ENCODE measurements at regions of chr5 and their contacts with region 1.

Region 1: GRCh38 chr5:173823711-173824528 is 64.2 kb upstream of the CPEB4 start:
- DNase-seq: peak; percentile 82 to 98
- H3K4me3 ChIP-seq: peak overlapping the region; percentile 25; the same call in 1 of the 2 replicates
- H3K27ac ChIP-seq: peak overlapping the region; percentile 77
- H3K4me1 ChIP-seq: peaks cover 58% of the 10 kb centered on the region
- H3K27me3 ChIP-seq: no peaks in the 10 kb centered on the region
- CTCF ChIP-seq: no peak

Region 2: GRCh38 chr5:173331956-173332479 is 491.9 kb before region 1 on chr5:
- CTCF ChIA-PET with region 1: no interaction called
- POLR2A ChIA-PET with region 1: no interaction called
- intact Hi-C with region 1: loop called (anchors 10 kb)
- DNase-seq: peak; percentile 55 to 57
- H3K4me3 ChIP-seq: no peak overlapping the region
- H3K27ac ChIP-seq: peak overlapping the region; percentile 100; the same call in 1 of the 2 replicates
- H3K4me1 ChIP-seq: peaks cover 64% of the 10 kb centered on the region
- H3K27me3 ChIP-seq: no peaks in the 10 kb centered on the region
- CTCF ChIP-seq: peak; percentile 72

Region 3: DNA sequence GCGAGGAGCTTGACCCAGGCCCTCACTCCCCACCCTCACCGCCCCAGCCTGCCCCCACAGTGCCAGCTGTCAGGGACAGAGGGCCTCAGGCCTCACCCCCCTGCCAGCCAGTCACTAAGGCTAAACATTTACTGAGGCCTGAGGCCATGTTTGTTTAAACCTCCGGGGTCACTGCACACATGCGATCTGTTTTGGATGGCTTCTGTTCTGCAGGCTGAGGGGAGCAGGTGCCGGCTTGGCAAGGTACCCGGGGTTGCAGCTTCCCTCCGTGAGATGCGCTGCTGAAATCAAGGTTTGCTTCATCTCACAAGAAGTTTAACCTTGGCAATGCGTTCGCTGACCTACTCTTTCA is 104.2 kb before region 1 on chr5:
- CTCF ChIA-PET with region 1: no interaction called
- POLR2A ChIA-PET with region 1: no interaction called
- intact Hi-C with region 1: no loop called
- DNase-seq: no peak
- H3K4me3 ChIP-seq: no peak overlapping the region
- H3K27ac ChIP-seq: no peak overlapping the region
- H3K4me1 ChIP-seq: peaks cover 12% of the 10 kb centered on the region
- H3K27me3 ChIP-seq: no peaks in the 10 kb centered on the region
- CTCF ChIP-seq: no peak

Region 4: GRCh38 chr5:173764321-173765029 is 59.4 kb before region 1 on chr5:
- CTCF ChIA-PET with region 1: no interaction called
- POLR2A ChIA-PET with region 1: interaction called, 11 read pairs
- intact Hi-C with region 1: loop called (anchors 1 kb)
- DNase-seq: peak; percentile 89 to 95
- H3K4me3 ChIP-seq: no peak overlapping the region
- H3K27ac ChIP-seq: peak overlapping the region; percentile 91
- H3K4me1 ChIP-seq: peaks cover 46% of the 10 kb centered on the region
- H3K27me3 ChIP-seq: no peaks in the 10 kb centered on the region
- CTCF ChIP-seq: no peak

Region 5: DNA sequence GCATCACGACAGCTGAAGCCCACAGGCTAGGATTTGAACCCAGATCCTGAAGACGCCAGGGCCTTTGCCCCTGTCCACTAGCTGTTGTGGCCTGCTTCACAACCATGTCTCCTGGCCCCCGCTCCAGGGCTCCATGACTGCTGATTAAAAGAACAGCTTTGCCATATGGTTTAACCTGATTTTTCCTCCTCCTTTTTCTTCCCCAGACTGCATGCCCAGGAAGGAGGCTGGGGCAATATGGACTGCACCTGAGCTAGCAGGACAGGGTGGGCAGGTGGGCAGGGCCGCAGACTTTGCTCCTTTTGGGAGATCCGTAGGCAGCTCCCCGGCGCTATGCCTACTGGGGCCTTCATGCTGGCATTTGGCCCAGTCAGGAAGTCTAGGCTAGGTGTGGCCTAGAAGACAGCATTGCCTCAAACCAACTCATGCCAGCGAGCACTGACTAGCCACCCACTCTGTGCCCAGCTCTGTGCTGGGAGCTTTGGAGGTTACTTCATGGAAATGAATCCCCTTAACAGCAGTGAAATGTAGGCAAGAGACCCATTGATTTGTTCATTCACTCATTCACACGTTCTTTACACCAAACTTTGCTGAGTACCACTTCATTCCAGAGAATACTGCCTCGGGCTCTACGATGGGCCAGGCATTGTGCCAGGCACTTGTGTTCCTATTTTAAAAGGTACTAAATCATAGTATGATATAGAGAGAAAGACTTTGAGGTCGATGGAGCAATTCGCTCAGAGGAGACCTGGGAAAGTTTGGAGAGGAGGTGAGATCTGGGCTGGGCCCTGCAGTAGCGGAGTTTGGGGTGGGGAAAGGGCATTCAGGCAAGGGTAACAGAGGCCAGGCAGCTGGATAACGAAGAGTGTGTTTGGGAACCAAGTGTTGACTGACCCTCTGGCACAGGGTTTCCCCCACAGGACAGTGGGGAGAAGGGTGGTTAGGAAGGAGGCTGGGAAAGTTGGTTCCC is 29.9 kb before region 1 on chr5:
- CTCF ChIA-PET with region 1: no interaction called
- POLR2A ChIA-PET with region 1: interaction called, 6 read pairs
- intact Hi-C with region 1: loop called (anchors 1 kb)
- DNase-seq: peak; percentile 51 to 64
- H3K4me3 ChIP-seq: no peak overlapping the region
- H3K27ac ChIP-seq: peak overlapping the region; percentile 74
- H3K4me1 ChIP-seq: peaks cover 70% of the 10 kb centered on the region
- H3K27me3 ChIP-seq: no peaks in the 10 kb centered on the region
- CTCF ChIP-seq: no peak

Region 6: GRCh38 chr5:173859428-173860159 is 35.7 kb after region 1 on chr5:
- CTCF ChIA-PET with region 1: no interaction called
- POLR2A ChIA-PET with region 1: interaction called, 6 read pairs
- intact Hi-C with region 1: loop called (anchors 1 kb)
- DNase-seq: peak; percentile 73 to 83
- H3K4me3 ChIP-seq: no peak overlapping the region
- H3K27ac ChIP-seq: peak overlapping the region; percentile 54
- H3K4me1 ChIP-seq: peaks cover 50% of the 10 kb centered on the region
- H3K27me3 ChIP-seq: no peaks in the 10 kb centered on the region
- CTCF ChIP-seq: no peak

Region 7: DNA sequence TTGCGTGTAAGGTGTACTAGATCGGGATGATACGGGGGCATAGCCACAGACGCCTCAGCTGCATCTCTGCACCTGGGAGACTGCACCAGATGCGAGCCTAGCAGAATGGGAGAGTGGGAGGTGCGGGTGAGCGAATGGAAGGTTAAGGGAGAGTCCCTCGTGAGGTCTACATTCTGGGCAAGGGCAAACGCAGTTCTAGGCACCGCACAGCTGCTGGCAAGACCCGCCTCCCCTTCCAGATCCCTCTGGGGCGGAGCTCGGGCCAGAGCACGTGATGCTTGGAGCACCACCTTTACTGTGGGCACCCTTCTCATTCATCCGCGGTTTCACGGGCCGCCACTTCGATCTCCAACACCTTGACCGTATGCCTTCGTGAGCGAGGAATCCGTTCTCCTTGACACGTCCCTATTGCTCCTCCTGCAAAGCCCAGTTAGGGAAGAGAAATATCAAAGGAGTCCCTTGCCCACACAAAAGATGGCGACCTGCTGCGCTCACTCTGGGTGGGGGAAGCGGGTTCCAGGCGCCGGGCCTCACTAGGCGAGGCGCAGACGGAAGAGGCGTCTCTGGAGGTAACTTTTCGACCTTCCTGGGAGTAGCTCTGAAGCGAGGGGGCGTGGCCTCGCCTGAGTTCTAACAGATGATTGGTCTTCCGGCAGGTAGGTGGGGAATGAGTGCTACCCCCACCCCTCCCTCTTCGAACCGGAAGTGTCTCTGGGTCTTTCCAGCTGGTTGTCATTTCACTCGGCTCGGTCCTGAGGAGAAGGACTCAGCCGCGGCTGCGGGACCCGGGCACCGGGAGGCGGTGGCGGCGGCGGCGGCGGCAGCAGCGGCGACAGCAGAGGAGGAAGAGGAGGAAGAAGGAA is 63.9 kb after region 1 on chr5 and contains the start of gene CPEB4:
- CTCF ChIA-PET with region 1: interaction called, 3 read pairs
- POLR2A ChIA-PET with region 1: interaction called, 3 read pairs
- intact Hi-C with region 1: loop called (anchors 1 kb)
- DNase-seq: peak; percentile 96 to 98
- H3K4me3 ChIP-seq: peak within 1 kb of the TSS; percentile 86
- H3K27ac ChIP-seq: peak within 1 kb of the TSS; percentile 84
- H3K4me1 ChIP-seq: peaks cover 66% of the 10 kb centered on the region
- H3K27me3 ChIP-seq: no peaks in the 10 kb centered on the region
- CTCF ChIP-seq: no peak
- total RNA-seq, gene CPEB4: 11.6 and 15.4 TPM in 2 replicates

Region 8: GRCh38 chr5:173972925-173973615 is 149.2 kb after region 1 on chr5:
- CTCF ChIA-PET with region 1: no interaction called
- POLR2A ChIA-PET with region 1: no interaction called
- intact Hi-C with region 1: loop called (anchors 2 kb)
- DNase-seq: peak; percentile 54 to 81
- H3K4me3 ChIP-seq: no peak overlapping the region; the same call in 1 of the 2 replicates
- H3K27ac ChIP-seq: no peak overlapping the region
- H3K4me1 ChIP-seq: peaks cover 37% of the 10 kb centered on the region
- H3K27me3 ChIP-seq: no peaks in the 10 kb centered on the region
- CTCF ChIP-seq: peak; percentile 90

Measured in PC-9 (cell line).